Caco-2 (cell line): ENCODE measurements at regions of chr4 and their contacts with region 1.

Region 1: GRCh38 chr4:42371306-42372252 is 25.7 kb upstream of the SHISA3 start:
- DNase-seq: peak in 1 of 2 experiments; percentile 13
- H3K4me3 ChIP-seq: no peak overlapping the region
- H3K4me3 Mint-ChIP-seq: no peak overlapping the region
- H3K27ac Mint-ChIP-seq: no peak overlapping the region
- H3K4me1 ChIP-seq: no peaks in the 10 kb centered on the region
- H3K4me1 Mint-ChIP-seq: no peaks in the 10 kb centered on the region
- H3K27me3 ChIP-seq: no peaks in the 10 kb centered on the region
- H3K27me3 Mint-ChIP-seq: peaks cover 5% of the 10 kb centered on the region
- CTCF ChIP-seq: peak; percentile 17 to 47

Region 2: GRCh38 chr4:42519803-42520417 is 148.3 kb after region 1 on chr4:
- CTCF ChIA-PET with region 1: interaction called, 49 read pairs
- POLR2A ChIA-PET with region 1: no interaction called
- intact Hi-C with region 1: loop called (anchors 1 kb)
- DNase-seq: peak in 1 of 2 experiments; percentile 62
- H3K4me3 ChIP-seq: no peak overlapping the region
- H3K4me3 Mint-ChIP-seq: no peak overlapping the region
- H3K27ac Mint-ChIP-seq: no peak overlapping the region
- H3K4me1 ChIP-seq: no peaks in the 10 kb centered on the region
- H3K4me1 Mint-ChIP-seq: no peaks in the 10 kb centered on the region
- H3K27me3 ChIP-seq: no peaks in the 10 kb centered on the region
- H3K27me3 Mint-ChIP-seq: no peaks in the 10 kb centered on the region
- CTCF ChIP-seq: peak; percentile 35 to 40